ENCODE measurements at regions of chr15 and their contacts with region 1.

Region 1: DNA sequence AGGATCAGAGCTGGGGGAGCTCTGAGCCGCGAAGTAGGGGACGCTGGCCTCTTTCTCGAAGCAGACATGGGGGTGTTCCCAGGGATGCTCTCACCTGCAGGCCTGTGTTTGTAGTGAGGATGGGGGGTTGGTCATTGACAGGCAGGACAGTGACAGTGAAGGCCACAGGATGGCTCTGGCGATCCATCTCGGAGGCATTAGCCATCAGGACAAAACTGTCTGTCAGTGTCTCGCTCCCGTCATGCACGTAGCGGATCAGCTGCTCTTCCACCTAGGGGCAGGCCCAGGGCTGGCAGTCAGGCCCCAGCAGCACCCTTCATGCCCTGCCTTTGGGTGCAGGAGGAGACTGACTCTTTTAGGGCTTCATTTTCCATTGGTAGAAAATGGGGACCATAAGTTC is 28.0 kb downstream of the CSPG4 start:
- DNase-seq: no peak
- H3K4me3 ChIP-seq: no peak overlapping the region
- H3K27ac ChIP-seq: no peak overlapping the region
- H3K4me1 ChIP-seq: peaks cover 0 to 13% (median 3%) of the 10 kb centered on the region in 4 experiments; a peak in 4 of 7 replicates
- H3K27me3 ChIP-seq: no peaks in the 10 kb centered on the region
- CTCF ChIP-seq: peak; percentile 17 to 29 (median 29); a peak in 3 of 4 replicates
- EP300 ChIP-seq: no peak
- POLR2A ChIP-seq: no peak
- RAD21 ChIP-seq: peak; percentile 21 to 42; a peak in 2 of 4 replicates

Region 2: GRCh38 chr15:75639709-75640482 is 44.7 kb before region 1 on chr15 and contains the start of gene IMP3:
- CTCF ChIA-PET with region 1: interaction called, 24 read pairs
- POLR2A ChIA-PET with region 1: interaction called, 11 read pairs
- DNase-seq: peak; percentile 89 to 92
- H3K4me3 ChIP-seq: peak within 1 kb of the TSS; percentile 82 to 99 (median 94)
- H3K27ac ChIP-seq: peak within 1 kb of the TSS; percentile 94
- H3K4me1 ChIP-seq: peaks cover 0 to 8% (median 6%) of the 10 kb centered on the region in 4 experiments; a peak in 5 of 7 replicates
- H3K27me3 ChIP-seq: no peaks in the 10 kb centered on the region
- CTCF ChIP-seq: no peak
- EP300 ChIP-seq: no peak
- POLR2A ChIP-seq: peak; percentile 92 to 97
- RAD21 ChIP-seq: no peak
- total RNA-seq, gene IMP3: 114 and 122 TPM in 2 replicates

Region 3: DNA sequence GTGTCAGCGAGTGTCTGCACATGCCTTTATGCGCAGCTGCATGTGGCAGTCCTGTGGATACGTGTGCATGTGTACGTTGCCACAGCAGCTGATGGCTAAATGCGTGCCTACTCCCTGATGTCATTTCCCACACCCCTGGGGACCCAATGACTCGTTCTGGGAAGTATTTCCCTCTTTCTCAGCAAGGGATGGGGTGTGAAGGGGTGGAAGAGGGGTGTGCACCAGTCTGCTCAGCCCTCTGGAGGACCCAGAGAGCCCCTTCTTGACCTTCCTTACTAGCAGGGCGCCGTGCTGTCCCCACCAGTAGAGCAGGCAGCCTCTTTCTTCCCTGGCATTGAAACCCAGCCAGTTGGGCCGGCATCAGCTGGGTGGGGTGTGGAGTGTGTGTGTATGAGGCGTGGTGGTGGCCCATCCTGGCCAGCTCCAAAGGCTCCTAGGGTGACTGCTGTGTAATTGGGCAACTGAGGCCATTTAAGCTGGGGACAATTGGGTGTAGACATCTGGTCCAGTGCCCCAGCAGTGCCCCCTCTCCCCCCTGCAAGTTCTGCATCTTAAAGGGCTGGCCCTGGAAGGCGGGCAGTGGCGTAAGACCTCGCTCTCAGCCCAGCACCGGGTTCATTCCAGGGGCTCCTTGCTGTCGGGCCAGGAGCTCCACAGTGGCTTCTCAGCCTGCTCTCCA is 17.7 kb before region 1 on chr15:
- CTCF ChIA-PET with region 1: interaction called, 60 read pairs
- POLR2A ChIA-PET with region 1: interaction called, 6 read pairs
- DNase-seq: no peak
- H3K4me3 ChIP-seq: no peak overlapping the region
- H3K27ac ChIP-seq: no peak overlapping the region
- H3K4me1 ChIP-seq: peaks cover 0 to under 1% (median under 1%) of the 10 kb centered on the region in 4 experiments; a peak in 4 of 7 replicates
- H3K27me3 ChIP-seq: peaks cover 0 to 3% (median 0%) of the 10 kb centered on the region in 4 experiments; a peak in 1 of 7 replicates
- CTCF ChIP-seq: no peak
- EP300 ChIP-seq: no peak
- POLR2A ChIP-seq: no peak
- RAD21 ChIP-seq: no peak

Region 4: DNA sequence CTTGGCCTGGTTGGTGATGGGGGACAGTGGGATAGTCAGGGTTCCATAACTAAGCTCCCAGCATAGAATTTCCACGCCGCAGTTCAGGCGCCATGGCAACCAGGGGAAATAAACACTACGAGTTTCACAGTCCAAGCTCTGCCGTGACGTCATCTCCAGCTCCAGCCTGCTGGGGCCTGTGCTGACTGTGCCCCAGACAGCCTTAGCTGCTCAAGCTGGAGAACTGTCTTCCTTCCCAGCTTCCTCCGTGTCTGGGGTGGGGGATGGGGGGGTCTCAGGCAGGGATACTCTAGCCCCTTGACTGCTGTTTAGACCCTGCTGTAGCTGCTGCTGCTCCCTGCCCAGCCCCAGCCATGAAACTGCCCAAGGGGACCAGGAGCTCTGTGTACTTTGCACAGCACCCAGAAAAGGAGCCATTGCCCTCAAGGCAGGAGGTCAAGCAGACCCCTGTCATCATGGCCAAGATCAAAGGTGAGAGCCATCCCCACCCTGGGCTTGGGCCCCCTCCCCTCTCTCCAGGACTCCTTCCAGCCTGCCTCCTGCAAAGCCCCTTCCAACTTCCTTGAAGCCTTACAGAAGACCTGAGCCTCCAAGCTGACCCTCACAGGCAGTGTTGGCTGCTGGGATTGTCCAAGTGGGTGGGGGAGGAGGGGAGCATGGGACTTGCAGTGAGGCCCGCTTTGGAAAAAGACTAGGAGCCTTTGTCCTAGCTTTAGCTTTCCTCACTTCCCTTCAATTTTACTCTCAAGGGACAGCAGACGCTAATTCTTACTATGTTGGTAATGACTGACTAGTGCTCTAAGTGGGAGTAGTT is 39.4 kb after region 1 on chr15:
- CTCF ChIA-PET with region 1: interaction called, 25 read pairs
- POLR2A ChIA-PET with region 1: no interaction called
- DNase-seq: no peak
- H3K4me3 ChIP-seq: no peak overlapping the region
- H3K27ac ChIP-seq: no peak overlapping the region
- H3K4me1 ChIP-seq: no peaks in the 10 kb centered on the region; a peak in 1 of 7 replicates
- H3K27me3 ChIP-seq: no peaks in the 10 kb centered on the region; a peak in 3 of 7 replicates
- CTCF ChIP-seq: no peak
- EP300 ChIP-seq: no peak
- POLR2A ChIP-seq: no peak
- RAD21 ChIP-seq: no peak

Region 5: DNA sequence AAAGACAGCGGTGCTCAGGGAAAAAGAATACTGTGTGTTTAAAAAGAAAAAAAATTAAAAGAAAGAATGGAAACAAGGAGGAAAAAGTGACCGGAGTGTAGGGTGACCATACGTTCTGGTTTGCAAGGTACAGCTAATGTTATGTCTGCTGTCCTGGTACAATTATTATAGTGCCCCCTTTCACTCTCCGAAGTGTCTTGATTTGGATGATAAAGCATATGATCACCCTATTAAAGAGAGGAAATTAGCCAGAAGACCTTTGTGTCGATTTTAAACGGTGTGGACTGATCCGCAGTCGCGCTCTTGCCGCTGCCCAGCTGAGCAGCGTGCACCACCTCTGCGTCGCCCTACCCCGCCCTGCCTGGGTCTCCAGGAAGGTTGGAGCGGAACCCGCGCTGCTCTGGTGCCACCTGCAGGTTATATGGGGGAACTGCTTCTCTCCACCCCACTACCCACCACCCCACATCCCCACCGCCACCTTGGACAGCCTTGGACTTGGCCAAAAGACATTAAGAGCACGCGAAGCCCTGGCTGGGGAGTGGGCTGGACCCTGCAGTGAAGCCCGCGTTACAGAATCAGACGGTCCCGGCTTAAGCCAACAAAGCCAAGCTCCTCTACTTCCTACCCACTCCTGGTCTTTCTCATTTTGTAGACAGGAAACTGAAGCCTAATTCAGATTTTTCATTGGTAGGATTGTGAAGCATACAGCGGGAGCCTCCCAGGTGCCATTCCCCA is 117.4 kb after region 1 on chr15:
- CTCF ChIA-PET with region 1: interaction called, 37 read pairs
- POLR2A ChIA-PET with region 1: no interaction called
- DNase-seq: peak; percentile 47 to 95
- H3K4me3 ChIP-seq: peak overlapping the region in 3 of 4 experiments; percentile 14 to 45 (median 26); a peak in 4 of 8 replicates
- H3K27ac ChIP-seq: no peak overlapping the region
- H3K4me1 ChIP-seq: no peaks in the 10 kb centered on the region; a peak in 1 of 7 replicates
- H3K27me3 ChIP-seq: peaks cover 0 to 9% (median 4%) of the 10 kb centered on the region in 4 experiments; a peak in 3 of 7 replicates
- CTCF ChIP-seq: peak; percentile 77 to 95 (median 94)
- EP300 ChIP-seq: no peak
- POLR2A ChIP-seq: no peak
- RAD21 ChIP-seq: peak; percentile 93 to 94

Measured in H1 (cell line).